ENCODE measurements at regions of chr17 and their contacts with region 1.

Region 1: GRCh38 chr17:78970834-78971773 is 8.6 kb downstream of the LGALS3BP start:
- DNase-seq: peak; percentile 67 to 88 (median 76)
- ATAC-seq: peak; percentile 84
- H3K4me3 ChIP-seq: no peak overlapping the region
- H3K4me3 Mint-ChIP-seq: peak overlapping the region; percentile 40
- H3K27ac ChIP-seq: no peak overlapping the region
- H3K27ac Mint-ChIP-seq: peak overlapping the region; percentile 59
- H3K4me1 ChIP-seq: peaks cover 18% of the 10 kb centered on the region
- H3K4me1 Mint-ChIP-seq: peaks cover 7% of the 10 kb centered on the region
- H3K27me3 ChIP-seq: no peaks in the 10 kb centered on the region
- H3K27me3 Mint-ChIP-seq: no peaks in the 10 kb centered on the region
- CTCF ChIP-seq: peak; percentile 95

Region 2: GRCh38 chr17:78444392-78444791 is 526.7 kb before region 1 on chr17:
- CTCF ChIA-PET with region 1: no interaction called
- POLR2A ChIA-PET with region 1: no interaction called
- intact Hi-C with region 1: loop called in 1 of 2 experiments (anchors 2 kb)
- DNase-seq: no peak
- ATAC-seq: no peak
- H3K4me3 ChIP-seq: no peak overlapping the region
- H3K4me3 Mint-ChIP-seq: no peak overlapping the region
- H3K27ac ChIP-seq: no peak overlapping the region
- H3K27ac Mint-ChIP-seq: no peak overlapping the region
- H3K4me1 ChIP-seq: no peaks in the 10 kb centered on the region
- H3K4me1 Mint-ChIP-seq: no peaks in the 10 kb centered on the region
- H3K27me3 ChIP-seq: no peaks in the 10 kb centered on the region
- H3K27me3 Mint-ChIP-seq: no peaks in the 10 kb centered on the region
- CTCF ChIP-seq: no peak

Region 3: DNA sequence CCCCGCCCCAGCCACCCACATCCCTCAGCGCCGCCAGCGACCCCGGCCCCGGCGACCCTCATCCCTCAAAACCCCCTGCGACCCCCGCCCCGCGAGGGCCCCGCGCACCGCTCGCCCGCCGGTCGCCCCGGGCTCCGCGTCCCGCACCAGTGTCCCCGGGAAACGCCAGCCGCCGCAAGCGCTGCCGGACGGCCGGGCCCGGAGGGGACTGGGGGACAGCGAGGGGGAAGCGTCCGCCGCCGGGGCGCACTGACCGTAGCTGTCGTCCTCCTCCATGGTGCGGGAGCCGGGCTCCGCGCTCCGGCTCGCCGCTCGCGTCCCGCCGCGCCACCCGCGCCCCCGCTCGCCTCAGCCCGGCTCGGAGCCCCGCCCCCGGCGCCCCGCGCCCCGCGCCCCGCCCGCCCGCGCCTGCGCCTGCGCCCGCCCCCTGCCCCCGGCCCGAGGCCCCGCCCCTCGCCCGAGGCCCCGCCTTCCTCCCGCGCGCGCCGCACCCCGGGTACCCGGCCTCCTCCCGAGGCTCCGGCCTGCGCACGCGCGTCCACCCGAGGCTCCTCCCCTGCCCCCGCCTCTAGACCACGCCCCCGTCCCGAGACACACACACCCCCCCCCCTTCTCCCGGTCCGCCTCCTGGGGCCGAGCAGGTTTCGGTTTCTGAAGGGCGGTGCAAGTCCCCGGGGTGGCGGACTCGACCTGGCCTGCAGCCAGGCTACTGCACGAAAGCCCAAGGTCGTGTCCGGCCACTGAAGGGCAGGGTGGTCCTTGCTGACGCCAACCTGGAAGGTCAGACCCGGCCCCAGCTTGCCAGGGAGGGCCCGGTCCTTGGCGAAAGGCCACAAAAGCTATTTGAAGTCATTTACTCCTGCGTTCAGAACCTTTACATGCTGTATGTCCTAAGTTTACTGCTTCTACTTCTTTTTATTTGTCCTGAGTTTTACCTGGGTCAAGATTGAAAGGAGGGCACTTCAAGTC is 188.9 kb before region 1 on chr17 and contains the start of gene CYTH1:
- CTCF ChIA-PET with region 1: no interaction called
- POLR2A ChIA-PET with region 1: no interaction called
- intact Hi-C with region 1: no loop called
- DNase-seq: peak; percentile 96 to 100 (median 99)
- ATAC-seq: peak; percentile 67
- H3K4me3 ChIP-seq: peak within 1 kb of the TSS; percentile 93
- H3K4me3 Mint-ChIP-seq: peak within 1 kb of the TSS; percentile 96
- H3K27ac ChIP-seq: peak within 1 kb of the TSS; percentile 88 to 97
- H3K27ac Mint-ChIP-seq: peak within 1 kb of the TSS; percentile 95
- H3K4me1 ChIP-seq: peaks cover 74% of the 10 kb centered on the region
- H3K4me1 Mint-ChIP-seq: peaks cover 62% of the 10 kb centered on the region
- H3K27me3 ChIP-seq: no peaks in the 10 kb centered on the region
- H3K27me3 Mint-ChIP-seq: no peaks in the 10 kb centered on the region
- CTCF ChIP-seq: no peak
- total RNA-seq, gene CYTH1: 521 to 525 TPM

Region 4: DNA sequence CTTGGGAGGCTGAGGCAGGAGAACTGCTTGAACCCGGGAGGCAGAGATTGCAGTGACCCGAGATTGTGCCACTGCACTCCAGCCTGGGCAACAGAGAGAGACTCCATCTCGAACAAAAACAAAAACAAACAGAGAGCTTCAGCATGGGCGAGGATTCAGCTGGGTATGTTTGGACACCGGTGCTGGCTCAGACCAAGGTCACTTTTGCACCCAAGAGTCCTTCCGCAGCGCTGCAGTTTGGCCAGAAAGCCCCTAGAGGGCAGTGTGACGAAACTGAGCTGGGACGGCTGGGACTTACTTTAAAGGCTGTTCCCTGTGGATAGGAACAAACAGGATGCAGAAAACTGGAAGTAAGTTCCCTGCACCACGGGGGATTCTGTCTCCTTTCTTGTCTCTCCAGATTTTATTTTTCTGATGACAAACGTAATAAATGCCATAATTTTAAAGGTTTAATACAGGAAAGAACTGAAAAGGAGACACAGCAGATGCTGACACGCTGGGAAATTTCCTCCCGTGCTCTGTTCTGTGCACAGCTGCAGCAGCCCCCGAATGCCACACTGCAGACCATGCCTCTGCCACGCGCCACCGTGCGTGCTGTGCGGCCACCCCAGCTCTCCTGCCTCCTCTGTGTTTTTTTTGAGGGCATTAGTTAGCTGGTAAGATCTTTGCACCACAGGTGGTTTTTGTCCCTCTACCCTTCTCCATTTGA is 105.3 kb before region 1 on chr17:
- CTCF ChIA-PET with region 1: interaction called, 13 read pairs
- POLR2A ChIA-PET with region 1: interaction called, 5 read pairs
- intact Hi-C with region 1: loop called (anchors 1 kb)
- DNase-seq: peak; percentile 35 to 77 (median 54)
- ATAC-seq: peak; percentile 74
- H3K4me3 ChIP-seq: no peak overlapping the region
- H3K4me3 Mint-ChIP-seq: no peak overlapping the region
- H3K27ac ChIP-seq: no peak overlapping the region
- H3K27ac Mint-ChIP-seq: no peak overlapping the region
- H3K4me1 ChIP-seq: peaks cover 8% of the 10 kb centered on the region
- H3K4me1 Mint-ChIP-seq: no peaks in the 10 kb centered on the region
- H3K27me3 ChIP-seq: no peaks in the 10 kb centered on the region
- H3K27me3 Mint-ChIP-seq: no peaks in the 10 kb centered on the region
- CTCF ChIP-seq: peak; percentile 94